MCF 10A (cell line): ENCODE measurements at regions of chr2 and their contacts with region 1.

Region 1: DNA sequence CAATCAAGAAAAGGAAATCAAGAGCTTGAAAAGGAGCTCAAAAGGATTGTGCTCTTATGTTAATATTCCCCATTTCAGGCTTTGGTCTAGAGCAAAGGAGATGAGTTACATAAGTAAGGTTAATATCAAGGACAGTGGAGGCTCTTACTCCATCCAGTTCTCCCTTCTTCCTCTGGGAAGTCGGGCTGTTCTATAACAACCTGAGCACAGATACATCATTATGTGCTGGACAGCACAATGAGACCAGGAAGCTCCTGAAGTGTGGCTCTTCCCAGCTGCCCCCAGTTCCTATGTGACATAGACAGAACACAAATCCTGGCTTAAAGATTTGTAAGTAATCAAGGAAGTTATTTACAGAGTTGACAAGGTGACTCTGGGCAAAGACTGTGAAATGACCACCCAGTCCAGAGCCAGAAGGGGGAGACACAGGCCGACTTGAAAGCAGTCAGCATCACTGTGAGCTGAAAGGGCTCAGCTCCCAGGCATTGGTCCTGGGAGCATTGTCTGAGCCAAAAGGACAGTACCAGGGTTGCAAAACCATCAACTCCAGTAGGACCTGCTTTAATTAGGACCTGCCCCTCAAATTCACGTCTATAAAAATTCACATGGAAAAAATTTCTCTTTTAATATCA is 917.6 kb upstream of the ACVR2A start:
- DNase-seq: peak; percentile 71
- H3K4me3 Mint-ChIP-seq: no peak overlapping the region
- H3K27ac Mint-ChIP-seq: no peak overlapping the region
- H3K4me1 Mint-ChIP-seq: peaks cover 5% of the 10 kb centered on the region
- H3K27me3 Mint-ChIP-seq: no peaks in the 10 kb centered on the region
- CTCF ChIP-seq: peak; percentile 53

Region 2: GRCh38 chr2:146305164-146305563 is 622.0 kb before region 1 on chr2:
- CTCF ChIA-PET with region 1: no interaction called
- POLR2A ChIA-PET with region 1: no interaction called
- intact Hi-C with region 1: no loop called
- DNase-seq: no peak
- H3K4me3 Mint-ChIP-seq: no peak overlapping the region
- H3K27ac Mint-ChIP-seq: no peak overlapping the region
- H3K4me1 Mint-ChIP-seq: no peaks in the 10 kb centered on the region
- H3K27me3 Mint-ChIP-seq: no peaks in the 10 kb centered on the region
- CTCF ChIP-seq: no peak

Region 3: GRCh38 chr2:147331790-147332419 is 404.7 kb after region 1 on chr2:
- CTCF ChIA-PET with region 1: interaction called, 3 read pairs
- POLR2A ChIA-PET with region 1: no interaction called
- intact Hi-C with region 1: loop called (anchors 1 kb)
- DNase-seq: peak; percentile 70
- H3K4me3 Mint-ChIP-seq: no peak overlapping the region
- H3K27ac Mint-ChIP-seq: no peak overlapping the region
- H3K4me1 Mint-ChIP-seq: no peaks in the 10 kb centered on the region
- H3K27me3 Mint-ChIP-seq: no peaks in the 10 kb centered on the region
- CTCF ChIP-seq: peak; percentile 72